Tibial artery (tissue), 4 donors: ENCODE measurements at regions of chr5 and their contacts with region 1.

Region 1: GRCh38 chr5:132354381-132355139 is 14.9 kb upstream of the SLC22A5 start:
- DNase-seq: no peak
- H3K4me3 ChIP-seq: no peak overlapping the region
- H3K27ac ChIP-seq: no peak overlapping the region
- H3K4me1 ChIP-seq: no peaks in the 10 kb centered on the region
- H3K27me3 ChIP-seq: no peaks in the 10 kb centered on the region
- CTCF ChIP-seq: no peak

Region 2: DNA sequence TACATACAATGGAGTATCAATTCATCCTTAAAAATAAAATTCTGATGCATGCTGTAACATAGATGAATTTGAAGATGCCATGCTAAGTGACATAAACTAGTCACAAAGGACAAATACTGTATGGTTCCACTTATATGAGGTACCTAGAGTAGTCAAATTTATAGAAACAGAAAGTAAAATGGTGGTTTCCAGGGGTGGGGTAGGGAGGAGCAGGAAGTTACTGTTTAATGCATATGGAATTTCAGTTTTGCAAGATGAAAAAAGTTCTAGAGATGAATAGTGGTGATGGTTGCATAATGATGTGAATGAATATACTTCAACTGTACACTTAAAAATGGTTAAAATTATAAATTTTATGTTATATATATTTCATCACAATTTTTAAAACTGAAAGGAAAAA is 500.4 kb before region 1 on chr5:
- intact Hi-C with region 1: no loop called
- DNase-seq: no peak
- H3K4me3 ChIP-seq: no peak overlapping the region
- H3K27ac ChIP-seq: no peak overlapping the region
- H3K4me1 ChIP-seq: no peaks in the 10 kb centered on the region
- H3K27me3 ChIP-seq: no peaks in the 10 kb centered on the region
- CTCF ChIP-seq: no peak

Region 3: DNA sequence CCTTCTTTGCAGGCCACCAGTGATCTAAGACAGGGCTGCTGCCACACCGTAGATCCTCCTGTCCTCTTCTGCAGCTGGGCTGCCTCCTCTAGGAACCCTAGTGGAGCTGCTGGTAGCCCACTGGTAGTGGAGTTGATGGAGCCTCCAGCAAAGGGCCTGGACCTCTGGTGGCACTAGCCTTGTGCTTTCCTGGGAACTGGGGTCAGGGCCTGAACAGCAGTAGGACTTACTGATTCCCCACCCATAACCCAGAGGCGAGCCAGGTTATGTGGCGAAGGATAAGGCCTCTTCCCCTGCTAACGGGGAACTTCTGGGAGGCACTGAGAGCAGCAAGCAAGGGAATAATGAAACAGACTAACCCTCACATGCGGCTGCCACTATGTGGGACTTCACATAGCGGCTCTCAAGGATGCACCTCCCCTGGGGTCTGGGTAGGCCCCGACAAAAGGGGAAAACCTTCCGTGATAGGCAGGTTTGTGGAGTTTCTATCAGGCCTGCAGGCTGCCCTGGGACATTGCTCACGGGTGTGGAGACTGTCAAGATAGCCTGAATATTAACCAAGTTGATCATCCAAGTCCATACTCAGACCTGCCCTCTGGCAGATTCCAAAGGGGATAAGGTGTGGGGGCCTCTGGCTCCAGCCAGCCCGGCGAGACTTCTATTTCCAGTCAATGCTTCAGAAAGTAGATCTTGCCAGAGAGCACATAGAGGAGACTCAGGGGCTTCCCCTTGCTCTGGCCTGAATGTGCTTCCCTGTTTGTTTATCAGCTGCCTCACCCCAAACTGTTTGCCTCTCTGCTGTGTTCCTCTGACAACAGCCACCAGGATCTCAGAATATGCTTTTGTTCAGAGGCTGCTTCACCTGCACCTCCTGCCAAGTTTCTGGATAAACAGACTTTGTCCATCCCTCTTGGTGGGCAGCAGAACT is 53.0 kb before region 1 on chr5:
- intact Hi-C with region 1: loop called (anchors 10 kb)
- DNase-seq: no peak
- H3K4me3 ChIP-seq: no peak overlapping the region
- H3K27ac ChIP-seq: no peak overlapping the region
- H3K4me1 ChIP-seq: peaks cover 0 to 9% (median 0%) of the 10 kb centered on the region in 4 donors
- H3K27me3 ChIP-seq: no peaks in the 10 kb centered on the region
- CTCF ChIP-seq: no peak